GM12878 (cell line): ENCODE measurements at regions of chr14 and their contacts with region 1.

Region 1: GRCh38 chr14:45426670-45427282 is 173.8 kb upstream of the MIS18BP1 start:
- DNase-seq: peak; percentile 4
- ATAC-seq: peak; percentile 77
- H3K4me3 ChIP-seq: no peak overlapping the region
- H3K27ac ChIP-seq: no peak overlapping the region
- H3K4me1 ChIP-seq: no peaks in the 10 kb centered on the region
- H3K27me3 ChIP-seq: no peaks in the 10 kb centered on the region
- CTCF ChIP-seq: peak; percentile 46 to 60 (median 52); a peak in 5 of 6 replicates
- EP300 ChIP-seq: no peak
- POLR2A ChIP-seq: no peak
- RAD21 ChIP-seq: peak; percentile 76

Region 2: GRCh38 chr14:45373877-45374276 is 52.9 kb before region 1 on chr14:
- CTCF ChIA-PET with region 1: no interaction called
- POLR2A ChIA-PET with region 1: no interaction called
- RAD21 ChIA-PET with region 1: no interaction called
- SMC1A ChIA-PET with region 1: no interaction called
- in situ Hi-C with region 1: no loop called
- intact Hi-C with region 1: no loop called
- DNase-seq: no peak
- ATAC-seq: no peak
- H3K4me3 ChIP-seq: no peak overlapping the region
- H3K27ac ChIP-seq: no peak overlapping the region
- H3K4me1 ChIP-seq: no peaks in the 10 kb centered on the region
- H3K27me3 ChIP-seq: no peaks in the 10 kb centered on the region
- CTCF ChIP-seq: no peak
- EP300 ChIP-seq: no peak
- POLR2A ChIP-seq: no peak
- RAD21 ChIP-seq: no peak

Region 3: DNA sequence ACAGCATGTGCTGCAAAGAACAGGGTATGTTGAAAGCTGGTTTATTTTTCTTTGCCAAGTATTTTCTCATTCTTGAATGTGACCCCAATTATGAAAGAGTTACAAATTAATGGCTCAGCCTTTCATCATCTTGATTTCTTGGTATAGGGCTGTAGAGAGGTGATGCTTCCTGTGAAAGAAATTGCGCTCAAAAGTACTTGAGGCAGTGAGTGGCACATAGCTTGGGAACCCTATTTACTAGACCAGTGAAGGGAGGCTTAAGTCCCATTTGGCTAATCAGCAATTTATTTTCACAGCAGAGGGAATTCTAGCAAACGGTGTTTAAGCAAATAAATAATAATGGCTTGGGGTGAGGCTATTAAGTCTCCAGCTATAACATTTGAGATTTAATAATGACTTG is 19.8 kb before region 1 on chr14:
- CTCF ChIA-PET with region 1: interaction called, 11 read pairs
- POLR2A ChIA-PET with region 1: no interaction called
- RAD21 ChIA-PET with region 1: no interaction called
- SMC1A ChIA-PET with region 1: interaction called, 5 read pairs
- in situ Hi-C with region 1: no loop called
- intact Hi-C with region 1: no loop called
- DNase-seq: no peak
- ATAC-seq: no peak
- H3K4me3 ChIP-seq: no peak overlapping the region
- H3K27ac ChIP-seq: no peak overlapping the region
- H3K4me1 ChIP-seq: no peaks in the 10 kb centered on the region
- H3K27me3 ChIP-seq: no peaks in the 10 kb centered on the region
- CTCF ChIP-seq: no peak
- EP300 ChIP-seq: no peak
- POLR2A ChIP-seq: no peak
- RAD21 ChIP-seq: no peak

Region 4: DNA sequence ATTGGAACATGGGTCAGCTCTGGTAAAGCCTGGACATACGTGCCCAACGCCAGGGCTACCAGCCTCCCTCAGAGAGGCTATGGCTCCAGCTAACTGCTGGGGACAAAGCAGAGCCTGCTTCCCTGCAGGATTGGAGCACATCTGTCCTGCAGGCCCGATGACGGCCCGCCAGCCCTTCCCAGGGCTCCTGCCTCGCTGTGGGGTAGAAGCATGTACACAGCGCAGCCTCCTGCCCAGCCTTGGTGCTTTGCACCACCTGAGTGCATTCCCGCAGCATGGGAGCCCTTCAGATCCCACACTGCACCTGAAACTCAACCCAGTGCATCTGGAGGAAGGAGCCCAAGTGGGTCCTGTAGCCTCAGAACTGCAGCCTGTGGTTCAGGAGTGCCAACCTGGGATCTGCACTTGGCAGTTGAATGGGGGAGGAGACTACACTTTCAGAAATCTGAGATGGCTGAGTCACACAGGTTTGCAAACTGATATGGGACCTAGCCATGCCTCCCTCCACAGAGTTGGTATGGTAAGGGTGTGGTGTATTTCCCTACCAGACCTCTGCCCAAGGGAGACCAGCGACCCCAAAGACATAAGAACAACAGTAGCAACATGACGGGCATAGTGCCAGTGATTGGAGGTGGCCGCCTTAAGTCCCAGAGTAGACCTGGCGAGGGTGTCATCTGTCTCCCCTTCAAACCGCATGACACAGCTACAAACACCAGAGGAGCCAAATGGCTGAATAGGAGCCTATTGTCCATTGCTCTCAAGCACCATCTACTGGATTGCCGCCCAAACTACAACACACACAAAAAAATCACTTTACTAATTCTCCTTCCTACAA is 100.2 kb after region 1 on chr14:
- CTCF ChIA-PET with region 1: interaction called, 13 read pairs
- POLR2A ChIA-PET with region 1: no interaction called
- RAD21 ChIA-PET with region 1: interaction called, 4 read pairs
- SMC1A ChIA-PET with region 1: no interaction called
- in situ Hi-C with region 1: loop called (anchors 5 kb)
- intact Hi-C with region 1: loop called (anchors 1 kb)
- DNase-seq: peak; percentile 1
- ATAC-seq: peak; percentile 94
- H3K4me3 ChIP-seq: no peak overlapping the region
- H3K27ac ChIP-seq: no peak overlapping the region
- H3K4me1 ChIP-seq: no peaks in the 10 kb centered on the region
- H3K27me3 ChIP-seq: no peaks in the 10 kb centered on the region
- CTCF ChIP-seq: peak; percentile 56 to 66 (median 61); a peak in 5 of 6 replicates
- EP300 ChIP-seq: no peak
- POLR2A ChIP-seq: no peak
- RAD21 ChIP-seq: peak; percentile 59

Region 5: GRCh38 chr14:45940307-45940706 is 513.5 kb after region 1 on chr14:
- CTCF ChIA-PET with region 1: no interaction called
- POLR2A ChIA-PET with region 1: no interaction called
- RAD21 ChIA-PET with region 1: no interaction called
- SMC1A ChIA-PET with region 1: no interaction called
- in situ Hi-C with region 1: no loop called
- intact Hi-C with region 1: loop called (anchors 10 kb)
- DNase-seq: no peak
- ATAC-seq: no peak
- H3K4me3 ChIP-seq: no peak overlapping the region
- H3K27ac ChIP-seq: no peak overlapping the region
- H3K4me1 ChIP-seq: no peaks in the 10 kb centered on the region
- H3K27me3 ChIP-seq: no peaks in the 10 kb centered on the region
- CTCF ChIP-seq: no peak; a peak in 1 of 6 replicates
- EP300 ChIP-seq: no peak
- POLR2A ChIP-seq: no peak
- RAD21 ChIP-seq: 0 out of 2 replicates have a peak, but pooled peaks have one; percentile 7

Region 6: DNA sequence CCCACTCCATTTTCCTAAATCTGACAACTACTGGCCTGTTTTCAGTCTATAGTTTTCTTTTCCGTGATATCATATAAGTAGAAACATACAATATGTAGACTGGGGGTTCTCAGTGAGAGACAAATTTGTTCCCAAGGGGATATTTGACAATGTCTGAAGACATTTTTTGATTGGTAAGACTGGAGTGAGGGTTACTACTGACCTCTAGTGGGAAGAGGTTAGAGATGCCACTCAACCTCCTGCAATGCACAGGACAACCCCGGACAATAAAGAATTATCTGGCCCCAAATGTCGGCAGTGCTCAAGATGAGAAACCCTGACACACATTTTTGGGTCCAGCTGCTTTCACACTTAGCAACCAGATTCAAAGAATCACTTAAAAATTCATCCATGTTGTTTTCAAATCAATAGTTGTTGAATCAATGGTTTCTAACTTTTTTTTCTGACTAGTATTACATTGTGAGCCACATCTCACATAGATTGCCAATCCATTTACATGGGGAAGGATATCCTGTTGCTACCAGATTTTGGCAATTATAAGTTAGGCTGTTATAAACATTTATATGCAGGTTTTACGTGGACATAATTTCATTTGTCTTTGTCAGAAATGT is 917.7 kb after region 1 on chr14:
- CTCF ChIA-PET with region 1: no interaction called
- POLR2A ChIA-PET with region 1: no interaction called
- RAD21 ChIA-PET with region 1: no interaction called
- SMC1A ChIA-PET with region 1: no interaction called
- in situ Hi-C with region 1: loop called (anchors 25 kb)
- intact Hi-C with region 1: loop called (anchors 1 kb)
- DNase-seq: peak; percentile 2
- ATAC-seq: peak; percentile 95
- H3K4me3 ChIP-seq: no peak overlapping the region
- H3K27ac ChIP-seq: no peak overlapping the region
- H3K4me1 ChIP-seq: no peaks in the 10 kb centered on the region
- H3K27me3 ChIP-seq: no peaks in the 10 kb centered on the region
- CTCF ChIP-seq: peak; percentile 48 to 62 (median 61)
- EP300 ChIP-seq: no peak
- POLR2A ChIP-seq: no peak
- RAD21 ChIP-seq: peak; percentile 78